ENCODE measurements at regions of chr6 and their contacts with region 1.

Region 1: GRCh38 chr6:87701676-87702588 is at the start of gene AKIRIN2:
- DNase-seq: peak; percentile 98
- ATAC-seq: peak; percentile 75
- H3K4me3 Mint-ChIP-seq: peak within 1 kb of the TSS; percentile 87
- H3K27ac Mint-ChIP-seq: peak within 1 kb of the TSS; percentile 92
- H3K4me1 Mint-ChIP-seq: peaks cover 45% of the 10 kb centered on the region
- H3K27me3 Mint-ChIP-seq: no peaks in the 10 kb centered on the region
- total RNA-seq, gene AKIRIN2: 41.4 to 46.3 TPM

Region 2: GRCh38 chr6:87407901-87408720 is 293.8 kb before region 1 on chr6 and contains the start of gene CFAP206:
- CTCF ChIA-PET with region 1: no interaction called
- POLR2A ChIA-PET with region 1: no interaction called
- intact Hi-C with region 1: loop called in 1 of 2 experiments (anchors 2 kb)
- DNase-seq: peak; percentile 89
- ATAC-seq: peak; percentile 85
- H3K4me3 Mint-ChIP-seq: peak within 1 kb of the TSS; percentile 70
- H3K27ac Mint-ChIP-seq: no peak within 1 kb of the TSS
- H3K4me1 Mint-ChIP-seq: peaks cover 4% of the 10 kb centered on the region
- H3K27me3 Mint-ChIP-seq: peaks cover 15% of the 10 kb centered on the region
- total RNA-seq, gene CFAP206: not detected

Region 3: GRCh38 chr6:87589693-87590549 is 112.0 kb before region 1 on chr6 and contains the starts of genes ORC3 and RARS2:
- CTCF ChIA-PET with region 1: no interaction called
- POLR2A ChIA-PET with region 1: no interaction called
- intact Hi-C with region 1: loop called (anchors 1 kb)
- DNase-seq: peak; percentile 98
- ATAC-seq: peak; percentile 100
- H3K4me3 Mint-ChIP-seq: peak within 1 kb of the TSS; percentile 86
- H3K27ac Mint-ChIP-seq: peak within 1 kb of the TSS; percentile 94
- H3K4me1 Mint-ChIP-seq: peaks cover 51% of the 10 kb centered on the region
- H3K27me3 Mint-ChIP-seq: no peaks in the 10 kb centered on the region
- total RNA-seq, gene ORC3: 38.8 to 42.6 TPM
- total RNA-seq, gene RARS2: 20.8 to 24.7 TPM

Region 4: GRCh38 chr6:87731818-87732661 is 30.1 kb after region 1 on chr6:
- CTCF ChIA-PET with region 1: interaction called, 6 read pairs
- POLR2A ChIA-PET with region 1: no interaction called
- intact Hi-C with region 1: loop called (anchors 1 to 5 kb)
- DNase-seq: peak; percentile 67
- ATAC-seq: peak; percentile 78
- H3K4me3 Mint-ChIP-seq: no peak overlapping the region
- H3K27ac Mint-ChIP-seq: peak overlapping the region; percentile 75
- H3K4me1 Mint-ChIP-seq: peaks cover 32% of the 10 kb centered on the region
- H3K27me3 Mint-ChIP-seq: peaks cover 6% of the 10 kb centered on the region

Region 5: GRCh38 chr6:87808005-87808757 is 106.2 kb after region 1 on chr6:
- CTCF ChIA-PET with region 1: interaction called, 6 read pairs
- POLR2A ChIA-PET with region 1: no interaction called
- intact Hi-C with region 1: loop called (anchors 1 to 2 kb)
- DNase-seq: no peak
- ATAC-seq: peak; percentile 96
- H3K4me3 Mint-ChIP-seq: no peak overlapping the region
- H3K27ac Mint-ChIP-seq: peak overlapping the region; percentile 72
- H3K4me1 Mint-ChIP-seq: peaks cover 29% of the 10 kb centered on the region
- H3K27me3 Mint-ChIP-seq: peaks cover 15% of the 10 kb centered on the region

Region 6: GRCh38 chr6:88963139-88964090 is 1261.5 kb after region 1 on chr6 and contains the start of gene RNGTT:
- CTCF ChIA-PET with region 1: no interaction called
- POLR2A ChIA-PET with region 1: no interaction called
- intact Hi-C with region 1: loop called in 1 of 2 experiments (anchors 2 kb)
- DNase-seq: peak; percentile 99
- ATAC-seq: peak; percentile 100
- H3K4me3 Mint-ChIP-seq: peak within 1 kb of the TSS; percentile 99
- H3K27ac Mint-ChIP-seq: peak within 1 kb of the TSS; percentile 93
- H3K4me1 Mint-ChIP-seq: peaks cover 45% of the 10 kb centered on the region
- H3K27me3 Mint-ChIP-seq: no peaks in the 10 kb centered on the region
- total RNA-seq, gene RNGTT: 17.5 to 21.5 TPM

Measured in activated CD4-positive, alpha-beta T cell treated with anti-CD3 and anti-CD28 coated beads for 36 hours (primary cell).